AG04449 (cell line): ENCODE measurements at regions of chr14 and their contacts with region 1.

Region 1: DNA sequence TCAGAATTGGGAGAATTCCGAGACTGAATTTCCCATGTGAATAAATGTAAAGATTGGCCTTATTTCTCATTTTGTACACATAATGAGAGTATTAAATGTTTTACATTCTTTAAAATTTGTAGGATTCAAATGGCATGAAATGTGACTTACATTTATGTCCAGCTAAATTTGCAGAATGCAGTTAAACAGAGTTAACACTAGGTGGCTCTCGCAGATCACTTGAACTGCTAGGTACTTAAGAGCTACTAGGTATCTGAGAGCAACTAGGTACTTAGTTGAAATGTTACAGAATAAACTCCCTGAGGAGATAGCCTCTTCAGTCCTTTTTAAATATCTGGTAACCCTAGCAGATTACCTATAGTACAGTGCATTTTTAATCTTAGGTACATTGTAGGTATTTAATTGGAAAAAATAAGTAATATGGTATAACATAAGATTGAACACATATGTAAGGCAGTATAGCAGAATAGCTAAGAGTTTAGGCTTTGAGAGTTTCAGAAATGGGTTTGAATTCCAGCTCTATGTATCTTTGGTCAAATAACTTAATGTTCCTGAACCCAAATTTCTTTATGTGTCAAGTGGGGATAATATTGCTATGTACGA is 73.8 kb downstream of the KIAA0586 start:
- DNase-seq: peak; percentile 74
- H3K4me3 ChIP-seq: no peak overlapping the region
- CTCF ChIP-seq: peak; percentile 73

Region 2: GRCh38 chr14:58488550-58488949 is 12.8 kb before region 1 on chr14:
- CTCF ChIA-PET with region 1: interaction called, 36 read pairs
- POLR2A ChIA-PET with region 1: no interaction called
- DNase-seq: no peak
- H3K4me3 ChIP-seq: no peak overlapping the region
- CTCF ChIP-seq: no peak

Region 3: GRCh38 chr14:58513272-58513671 is 12.0 kb after region 1 on chr14:
- CTCF ChIA-PET with region 1: interaction called, 13 read pairs
- POLR2A ChIA-PET with region 1: no interaction called
- DNase-seq: no peak
- H3K4me3 ChIP-seq: no peak overlapping the region
- CTCF ChIP-seq: no peak

Region 4: GRCh38 chr14:59004012-59004411 is 502.7 kb after region 1 on chr14:
- CTCF ChIA-PET with region 1: interaction called, 30 read pairs
- POLR2A ChIA-PET with region 1: no interaction called
- DNase-seq: no peak
- H3K4me3 ChIP-seq: no peak overlapping the region
- CTCF ChIP-seq: peak; percentile 47

Region 5: DNA sequence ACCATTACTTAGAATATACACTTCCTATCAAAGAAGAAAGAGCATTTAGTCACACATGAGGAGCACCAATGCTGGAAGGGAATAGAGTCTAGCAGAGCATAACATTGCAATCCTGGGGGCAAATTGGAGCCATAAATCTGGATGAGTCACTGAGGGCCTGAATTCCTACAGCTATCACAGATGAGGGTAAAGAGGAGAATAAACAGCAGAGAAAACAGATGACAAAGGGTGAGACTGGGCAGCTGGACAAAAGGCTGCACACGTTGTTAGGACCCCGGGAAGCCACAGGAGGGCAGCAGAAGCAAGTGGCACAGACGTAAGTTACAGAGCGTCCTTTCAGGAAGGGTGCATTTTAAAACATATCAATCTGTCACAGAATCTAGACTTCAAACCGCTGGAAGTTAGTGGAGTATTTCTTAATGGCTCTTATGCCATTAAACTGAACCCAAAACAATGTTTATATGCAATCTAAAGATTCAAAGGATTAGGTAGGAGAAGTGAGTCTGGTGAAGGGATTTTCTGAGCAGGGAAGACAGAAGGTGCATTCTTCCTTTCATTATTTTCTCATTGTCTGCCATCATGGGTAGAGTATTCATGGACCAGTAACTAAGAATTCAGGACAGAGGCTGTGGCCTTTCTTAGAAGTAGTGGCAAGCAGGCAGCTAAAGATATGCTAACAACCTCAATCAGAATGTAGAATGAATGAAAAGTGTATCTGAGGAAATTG is 527.3 kb after region 1 on chr14:
- CTCF ChIA-PET with region 1: interaction called, 15 read pairs
- POLR2A ChIA-PET with region 1: no interaction called
- DNase-seq: peak; percentile 87
- H3K4me3 ChIP-seq: no peak overlapping the region
- CTCF ChIP-seq: peak; percentile 91

Region 6: GRCh38 chr14:59055439-59056045 is 554.2 kb after region 1 on chr14:
- CTCF ChIA-PET with region 1: interaction called, 42 read pairs
- POLR2A ChIA-PET with region 1: no interaction called
- DNase-seq: peak; percentile 5
- H3K4me3 ChIP-seq: no peak overlapping the region
- CTCF ChIP-seq: peak; percentile 57